ENCODE measurements at regions of chr11 and their contacts with region 1.

Region 1: DNA sequence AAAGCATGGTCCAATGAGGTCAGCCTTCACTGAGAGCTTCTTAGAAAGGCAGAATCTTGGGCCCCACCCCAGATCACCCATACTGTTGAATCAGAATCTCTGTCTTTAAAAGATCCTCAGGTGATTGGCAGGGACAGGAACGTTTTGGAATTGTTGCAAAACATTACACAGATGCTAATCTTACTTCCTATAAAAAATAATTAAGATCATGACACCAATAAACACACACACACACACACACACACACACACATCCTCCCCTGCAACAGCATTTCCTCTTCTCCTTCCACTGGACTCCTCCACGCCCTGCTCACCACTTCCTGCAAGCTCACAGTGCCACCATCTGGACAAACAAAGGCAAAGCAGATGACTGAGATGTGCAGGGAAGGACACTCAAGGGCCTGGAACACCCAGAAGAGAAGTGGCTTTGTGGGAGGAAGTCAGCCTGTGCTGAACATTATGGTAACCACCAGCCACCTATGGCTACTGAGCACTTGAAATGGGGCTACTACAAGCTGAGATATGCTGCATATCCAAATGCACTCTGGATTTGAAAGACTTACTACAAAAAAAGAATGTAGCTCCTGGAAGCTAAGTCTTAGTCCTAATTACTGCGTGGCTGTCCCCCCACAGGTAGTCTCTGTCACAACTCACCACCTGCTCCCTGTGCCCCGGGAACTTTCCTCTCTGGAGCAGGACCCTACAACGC is 65.6 kb downstream of the BTG4 start:
- DNase-seq: peak; percentile 81
- H3K4me3 ChIP-seq: no peak overlapping the region
- H3K27ac ChIP-seq: no peak overlapping the region
- H3K4me1 ChIP-seq: no peaks in the 10 kb centered on the region
- H3K27me3 ChIP-seq: no peaks in the 10 kb centered on the region
- CTCF ChIP-seq: peak; percentile 28 to 92 (median 80)
- POLR2A ChIP-seq: no peak

Region 2: DNA sequence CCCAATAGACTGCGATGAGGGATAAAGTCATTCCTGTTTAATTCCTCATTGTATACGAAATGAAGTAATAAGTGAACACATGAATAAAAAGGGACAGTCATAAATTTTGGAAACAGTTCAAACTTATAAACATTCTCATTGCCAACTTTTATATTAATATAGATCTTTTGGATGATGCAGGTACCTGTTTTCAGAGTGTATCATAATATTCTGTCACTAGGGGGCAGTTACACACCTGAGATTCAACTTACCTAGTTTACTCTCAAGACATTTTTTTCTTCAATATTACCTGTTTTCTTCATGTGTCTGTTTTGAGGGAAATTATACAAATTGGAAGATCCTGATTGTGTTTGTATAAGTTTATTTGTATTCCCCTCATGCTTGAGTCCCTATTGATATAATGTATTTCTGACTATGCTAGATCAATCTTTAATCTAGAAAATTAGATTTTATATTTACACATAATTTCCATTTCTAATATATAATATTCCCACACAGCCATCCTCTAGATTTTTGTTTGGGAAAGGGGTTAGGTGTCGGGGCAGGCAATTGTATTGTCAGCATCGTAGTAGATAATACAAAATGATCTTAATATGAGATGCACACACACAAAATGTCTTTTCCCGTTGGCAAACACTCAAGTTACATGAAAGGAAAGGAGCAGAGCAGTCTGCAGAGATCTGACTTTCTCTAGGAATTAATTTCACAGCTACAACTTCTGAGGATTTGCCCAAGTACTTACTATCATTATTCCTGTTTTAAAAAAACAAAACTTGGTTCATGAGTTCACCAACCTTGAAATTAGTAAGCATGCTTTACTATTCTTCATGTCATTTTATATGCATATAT is 998.4 kb before region 1 on chr11:
- intact Hi-C with region 1: loop called (anchors 10 kb)
- DNase-seq: no peak
- H3K4me3 ChIP-seq: no peak overlapping the region
- H3K27ac ChIP-seq: no peak overlapping the region
- H3K4me1 ChIP-seq: no peaks in the 10 kb centered on the region
- H3K27me3 ChIP-seq: no peaks in the 10 kb centered on the region
- CTCF ChIP-seq: peak; percentile 18 to 63 (median 58)
- POLR2A ChIP-seq: no peak

Region 3: DNA sequence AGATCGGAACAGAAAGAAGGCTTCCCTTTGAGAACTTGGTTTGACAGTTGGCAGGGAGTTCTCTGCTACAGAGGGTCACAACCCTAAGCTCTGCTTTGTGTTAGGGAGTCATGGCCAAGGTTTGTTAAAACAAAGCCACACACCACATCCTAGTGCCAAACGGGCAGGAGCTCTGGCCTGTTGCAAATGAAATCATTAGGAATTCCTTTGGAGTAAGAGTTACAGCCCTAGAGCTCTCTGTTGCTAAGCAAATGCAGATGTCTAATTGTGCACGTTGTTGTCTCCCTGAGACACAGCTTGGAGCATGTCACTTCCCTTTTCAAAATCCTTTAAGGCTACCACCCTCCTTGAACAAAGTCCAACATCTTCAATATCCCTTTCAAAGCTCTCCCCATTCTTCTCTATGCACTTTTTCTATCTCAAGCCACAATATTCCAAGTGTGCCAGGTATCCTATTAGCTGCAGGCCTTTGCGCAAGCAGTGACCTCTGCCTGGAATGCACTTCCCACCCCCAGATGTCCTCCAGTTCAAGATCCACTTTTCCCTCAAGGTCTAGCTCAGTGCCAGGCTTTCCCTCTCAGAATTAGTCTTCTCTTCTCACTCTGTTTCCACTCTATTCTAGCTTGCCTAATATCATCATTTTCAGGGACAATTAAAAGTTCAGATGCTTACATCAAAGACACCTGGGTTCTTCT is 454.8 kb before region 1 on chr11:
- intact Hi-C with region 1: no loop called
- DNase-seq: no peak
- H3K4me3 ChIP-seq: no peak overlapping the region
- H3K27ac ChIP-seq: no peak overlapping the region
- H3K4me1 ChIP-seq: no peaks in the 10 kb centered on the region
- H3K27me3 ChIP-seq: no peaks in the 10 kb centered on the region
- CTCF ChIP-seq: no peak
- POLR2A ChIP-seq: no peak

Region 4: GRCh38 chr11:111283945-111284481 is 162.5 kb before region 1 on chr11:
- intact Hi-C with region 1: loop called (anchors 1 kb)
- DNase-seq: no peak
- H3K4me3 ChIP-seq: no peak overlapping the region
- H3K27ac ChIP-seq: no peak overlapping the region
- H3K4me1 ChIP-seq: no peaks in the 10 kb centered on the region
- H3K27me3 ChIP-seq: no peaks in the 10 kb centered on the region
- CTCF ChIP-seq: no peak
- POLR2A ChIP-seq: no peak